ENCODE measurements at regions of chr14 and their contacts with region 1.

Region 1: GRCh38 chr14:36915081-36915480 is 253.4 kb downstream of the PAX9 start:
- DNase-seq: peak; percentile 21
- ATAC-seq: peak; percentile 68
- H3K4me3 ChIP-seq: no peak overlapping the region
- H3K27ac ChIP-seq: no peak overlapping the region
- H3K4me1 ChIP-seq: peaks cover 4% of the 10 kb centered on the region; the same call in 1 of the 2 replicates
- H3K27me3 ChIP-seq: no peaks in the 10 kb centered on the region
- CTCF ChIP-seq: no peak

Region 2: GRCh38 chr14:36936013-36936678 is 21.1 kb after region 1 on chr14:
- CTCF ChIA-PET with region 1: no interaction called
- POLR2A ChIA-PET with region 1: no interaction called
- intact Hi-C with region 1: loop called (anchors 2 kb)
- DNase-seq: peak; percentile 80
- ATAC-seq: peak; percentile 96
- H3K4me3 ChIP-seq: no peak overlapping the region
- H3K27ac ChIP-seq: 0 out of 2 replicates have a peak overlapping the region, but pooled peaks have one; percentile 6
- H3K4me1 ChIP-seq: peaks cover 19% of the 10 kb centered on the region
- H3K27me3 ChIP-seq: no peaks in the 10 kb centered on the region
- CTCF ChIP-seq: no peak

Region 3: DNA sequence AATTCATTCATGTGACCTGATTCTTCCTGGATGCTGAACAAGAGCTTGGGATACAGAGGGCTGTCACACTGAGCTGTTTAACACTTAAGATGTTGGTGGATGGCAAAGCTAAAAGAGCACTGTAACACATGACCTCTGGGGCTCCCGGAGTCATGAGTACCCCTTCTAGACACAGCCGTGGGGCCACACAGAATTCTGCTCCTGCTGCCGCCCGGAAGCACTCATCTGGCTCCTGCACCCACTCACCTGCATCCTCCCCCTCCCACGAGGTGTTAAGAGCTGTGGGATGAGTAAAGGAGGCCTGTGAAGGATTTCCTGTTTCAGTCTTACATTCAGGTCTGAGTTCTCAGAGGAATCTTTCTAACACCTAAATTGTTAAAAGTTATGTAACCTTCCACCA is 1214.6 kb after region 1 on chr14:
- CTCF ChIA-PET with region 1: no interaction called
- POLR2A ChIA-PET with region 1: no interaction called
- intact Hi-C with region 1: no loop called
- DNase-seq: no peak
- ATAC-seq: no peak
- H3K4me3 ChIP-seq: no peak overlapping the region
- H3K27ac ChIP-seq: no peak overlapping the region
- H3K4me1 ChIP-seq: no peaks in the 10 kb centered on the region
- H3K27me3 ChIP-seq: no peaks in the 10 kb centered on the region
- CTCF ChIP-seq: no peak